Ovary (tissue), 10 donors: ENCODE measurements at regions of chr20 and their contacts with region 1.

Region 1: GRCh38 chr20:37527638-37528441 is at the start of gene BLCAP:
- DNase-seq: peak; percentile 87 to 93 (median 92)
- H3K4me3 ChIP-seq: peak within 1 kb of the TSS; percentile 87
- H3K27ac ChIP-seq: peak within 1 kb of the TSS; percentile 82 to 96
- H3K4me1 ChIP-seq: peaks cover 13% of the 10 kb centered on the region
- H3K27me3 ChIP-seq: no peaks in the 10 kb centered on the region
- CTCF ChIP-seq: no peak
- EP300 ChIP-seq: no peak
- POLR2A ChIP-seq: no peak
- total RNA-seq, gene BLCAP: 27.7 to 147 (median 62.0) TPM

Region 2: DNA sequence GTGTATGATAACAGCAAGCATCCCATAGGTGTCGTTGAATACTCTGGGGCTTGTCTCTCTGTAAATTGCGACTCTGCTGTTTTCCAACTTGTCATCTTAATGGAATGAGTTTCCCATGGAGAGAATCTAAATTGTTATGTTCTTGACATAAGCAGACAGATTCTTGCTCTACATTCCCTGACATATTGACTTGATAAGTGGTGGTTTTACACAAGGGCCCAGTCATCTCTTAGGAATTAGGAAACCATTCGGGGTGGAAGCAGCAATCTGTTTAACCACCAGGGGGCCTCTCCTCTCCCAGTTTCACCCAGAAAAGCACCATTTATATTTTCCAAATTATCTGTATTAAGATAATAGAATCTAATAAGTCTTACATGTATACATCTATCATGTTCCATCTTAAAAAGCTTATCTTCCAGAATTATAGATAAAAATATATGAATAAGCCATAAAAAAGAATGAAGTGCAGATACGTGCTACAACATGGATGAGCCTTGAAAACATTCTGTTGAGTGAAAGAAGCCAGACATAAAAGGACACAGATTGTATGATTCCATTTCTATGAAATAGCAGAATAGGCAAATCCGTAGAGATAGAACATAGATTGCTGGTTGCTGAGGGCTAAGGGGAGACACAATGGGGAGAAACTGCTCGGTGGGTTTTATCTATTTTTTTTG is 325.4 kb before region 1 on chr20:
- intact Hi-C with region 1: loop called in 3 of 4 experiments (anchors 2 to 5 kb)
- DNase-seq: peak in 3 of 5 donors; percentile 19 to 59 (median 43)
- H3K4me3 ChIP-seq: no peak overlapping the region
- H3K27ac ChIP-seq: peak overlapping the region in 1 of 2 donors; percentile 32
- H3K4me1 ChIP-seq: peaks cover 4% of the 10 kb centered on the region
- H3K27me3 ChIP-seq: no peaks in the 10 kb centered on the region
- CTCF ChIP-seq: peak; percentile 56 to 81 (median 61)
- EP300 ChIP-seq: no peak
- POLR2A ChIP-seq: no peak

Region 3: GRCh38 chr20:37392421-37393178 is 135.2 kb before region 1 on chr20:
- intact Hi-C with region 1: loop called in 3 of 4 experiments (anchors 5 to 10 kb)
- DNase-seq: peak in 1 of 5 donors; percentile 21
- H3K4me3 ChIP-seq: no peak overlapping the region
- H3K27ac ChIP-seq: no peak overlapping the region
- H3K4me1 ChIP-seq: peaks cover 3% of the 10 kb centered on the region
- H3K27me3 ChIP-seq: no peaks in the 10 kb centered on the region
- CTCF ChIP-seq: no peak
- EP300 ChIP-seq: no peak
- POLR2A ChIP-seq: no peak

Region 4: DNA sequence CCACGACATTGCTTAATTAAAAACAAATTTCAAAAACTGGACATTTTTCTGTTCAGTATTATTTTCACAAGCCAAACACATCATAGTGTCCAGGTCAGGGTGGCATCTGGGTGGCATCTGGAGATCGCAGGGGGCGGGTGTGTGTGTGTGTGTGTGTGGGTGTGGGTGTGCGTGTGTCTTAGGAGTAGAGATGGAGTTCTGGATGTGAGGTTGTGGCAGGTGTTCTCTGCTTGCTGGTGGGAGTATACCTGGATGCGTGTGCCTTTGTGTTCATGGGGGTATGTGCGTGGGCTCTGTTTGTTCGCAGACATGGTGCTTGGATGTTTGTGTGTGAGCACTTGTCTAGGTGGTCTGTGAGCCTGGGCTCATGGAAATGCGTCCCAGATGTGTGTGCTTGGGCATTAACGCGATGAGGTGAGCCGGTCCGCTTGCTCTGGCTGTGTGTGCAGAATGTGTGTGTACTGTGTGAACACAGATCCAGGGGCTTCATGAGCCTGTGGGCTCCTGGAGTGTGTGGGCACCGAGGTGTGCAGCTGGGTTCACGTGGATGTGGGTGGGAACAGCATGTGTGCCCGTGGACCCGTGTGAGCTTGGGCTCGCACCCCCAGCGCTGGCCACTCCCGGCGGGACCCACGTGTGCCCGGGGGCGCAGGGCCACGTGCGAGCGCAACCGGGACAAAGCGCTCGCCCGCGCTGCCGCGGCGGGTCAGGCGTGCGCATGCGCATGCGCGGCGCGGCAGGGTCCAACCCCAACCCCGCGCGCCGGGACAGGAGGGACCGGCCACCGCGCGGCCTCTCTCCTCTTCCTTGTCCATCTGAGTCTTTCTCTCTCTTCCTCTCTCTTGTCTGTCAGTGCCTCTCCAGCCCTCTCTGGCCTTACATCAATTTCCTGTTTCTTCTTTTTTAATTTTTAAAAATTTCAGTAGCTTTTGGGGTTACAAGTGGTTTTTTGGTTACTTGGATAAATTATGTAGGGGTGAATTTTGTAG is 121.5 kb before region 1 on chr20:
- intact Hi-C with region 1: loop called in 2 of 4 experiments (anchors 5 to 10 kb)
- DNase-seq: peak; percentile 47 to 72 (median 55)
- H3K4me3 ChIP-seq: peak overlapping the region; percentile 16
- H3K27ac ChIP-seq: no peak overlapping the region
- H3K4me1 ChIP-seq: peaks cover 2% of the 10 kb centered on the region
- H3K27me3 ChIP-seq: no peaks in the 10 kb centered on the region
- CTCF ChIP-seq: no peak
- EP300 ChIP-seq: no peak
- POLR2A ChIP-seq: no peak

Region 5: GRCh38 chr20:37490663-37491350 is 37.0 kb before region 1 on chr20:
- intact Hi-C with region 1: no loop called
- DNase-seq: no peak
- H3K4me3 ChIP-seq: no peak overlapping the region
- H3K27ac ChIP-seq: no peak overlapping the region
- H3K4me1 ChIP-seq: no peaks in the 10 kb centered on the region
- H3K27me3 ChIP-seq: no peaks in the 10 kb centered on the region
- CTCF ChIP-seq: no peak
- EP300 ChIP-seq: no peak
- POLR2A ChIP-seq: no peak

Region 6: DNA sequence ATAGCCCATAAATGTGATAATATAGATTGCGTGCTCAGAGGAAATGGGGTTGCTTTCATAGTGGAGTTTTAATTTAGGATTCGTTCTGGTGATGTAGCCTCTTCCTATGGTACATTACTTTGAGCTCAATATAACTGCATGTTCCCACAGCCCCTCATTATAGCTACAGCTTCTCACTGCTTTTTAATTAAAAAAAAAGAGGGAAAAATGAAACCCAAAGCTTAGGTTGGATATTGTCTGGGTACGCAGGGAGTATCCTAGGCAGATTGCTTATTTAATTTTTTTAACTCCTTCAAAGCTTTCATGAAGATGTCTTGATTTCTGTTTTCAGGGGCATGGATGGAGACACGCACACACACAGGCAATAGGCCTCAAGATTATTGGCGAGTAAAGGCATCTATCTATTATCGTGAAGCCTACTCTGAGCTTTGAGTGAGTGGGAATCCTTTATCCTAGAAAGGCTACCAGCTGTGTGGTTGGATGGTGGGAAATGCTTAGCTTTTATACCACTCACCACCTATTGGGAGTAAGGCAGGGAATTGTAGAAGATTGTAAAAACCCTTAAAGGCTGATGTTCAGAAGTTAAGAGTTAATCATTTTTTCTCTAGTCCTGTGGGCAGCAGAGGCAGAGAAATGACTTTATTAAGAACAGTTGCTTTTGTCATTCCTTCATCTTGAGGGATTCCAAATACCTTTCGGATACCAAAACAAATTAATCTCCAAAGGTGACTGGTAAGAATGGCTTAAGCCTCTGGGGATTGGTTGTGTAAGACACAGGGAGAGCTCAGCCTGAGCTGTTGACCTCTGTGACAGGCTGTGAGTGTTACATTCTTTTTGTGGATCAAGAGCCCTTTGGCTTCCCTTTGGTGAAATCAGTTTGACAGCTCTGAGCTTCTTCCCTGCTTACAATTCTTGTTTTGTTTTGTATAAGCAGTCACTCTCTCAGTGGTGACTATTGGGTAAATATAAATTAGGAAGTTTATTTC is 199.4 kb after region 1 on chr20:
- intact Hi-C with region 1: no loop called
- DNase-seq: no peak
- H3K4me3 ChIP-seq: no peak overlapping the region
- H3K27ac ChIP-seq: no peak overlapping the region
- H3K4me1 ChIP-seq: no peaks in the 10 kb centered on the region
- H3K27me3 ChIP-seq: no peaks in the 10 kb centered on the region
- CTCF ChIP-seq: no peak
- EP300 ChIP-seq: no peak
- POLR2A ChIP-seq: no peak